CD4-positive, alpha-beta memory T cell (primary cell): ENCODE measurements at regions of chr22 and their contacts with region 1.

Region 1: DNA sequence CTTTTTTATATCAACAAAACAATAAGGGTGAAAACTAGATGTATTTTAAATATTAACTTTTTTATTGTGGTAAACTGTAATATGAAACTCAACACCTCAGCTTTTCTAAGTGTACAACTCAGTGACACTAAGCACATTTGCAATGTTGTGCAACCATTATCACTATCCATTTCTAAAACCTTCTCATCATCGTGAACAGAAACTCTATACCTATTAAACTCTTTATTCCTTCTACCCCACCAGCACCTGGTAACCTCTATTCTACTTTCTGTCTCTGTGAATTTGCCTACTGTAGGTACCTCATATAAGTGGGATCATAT is 9.4 kb downstream of the HORMAD2 start:
- DNase-seq: no peak
- H3K4me3 ChIP-seq: no peak overlapping the region
- H3K4me3 Mint-ChIP-seq: no peak overlapping the region
- H3K27ac ChIP-seq: no peak overlapping the region
- H3K27ac Mint-ChIP-seq: no peak overlapping the region
- H3K4me1 ChIP-seq: peaks cover 11% of the 10 kb centered on the region
- H3K4me1 Mint-ChIP-seq: peaks cover 7 to 12% (median 9%) of the 10 kb centered on the region in 4 donors
- H3K27me3 ChIP-seq: no peaks in the 10 kb centered on the region
- H3K27me3 Mint-ChIP-seq: peaks cover 1 to 2% of the 10 kb centered on the region in 2 donors

Region 2: DNA sequence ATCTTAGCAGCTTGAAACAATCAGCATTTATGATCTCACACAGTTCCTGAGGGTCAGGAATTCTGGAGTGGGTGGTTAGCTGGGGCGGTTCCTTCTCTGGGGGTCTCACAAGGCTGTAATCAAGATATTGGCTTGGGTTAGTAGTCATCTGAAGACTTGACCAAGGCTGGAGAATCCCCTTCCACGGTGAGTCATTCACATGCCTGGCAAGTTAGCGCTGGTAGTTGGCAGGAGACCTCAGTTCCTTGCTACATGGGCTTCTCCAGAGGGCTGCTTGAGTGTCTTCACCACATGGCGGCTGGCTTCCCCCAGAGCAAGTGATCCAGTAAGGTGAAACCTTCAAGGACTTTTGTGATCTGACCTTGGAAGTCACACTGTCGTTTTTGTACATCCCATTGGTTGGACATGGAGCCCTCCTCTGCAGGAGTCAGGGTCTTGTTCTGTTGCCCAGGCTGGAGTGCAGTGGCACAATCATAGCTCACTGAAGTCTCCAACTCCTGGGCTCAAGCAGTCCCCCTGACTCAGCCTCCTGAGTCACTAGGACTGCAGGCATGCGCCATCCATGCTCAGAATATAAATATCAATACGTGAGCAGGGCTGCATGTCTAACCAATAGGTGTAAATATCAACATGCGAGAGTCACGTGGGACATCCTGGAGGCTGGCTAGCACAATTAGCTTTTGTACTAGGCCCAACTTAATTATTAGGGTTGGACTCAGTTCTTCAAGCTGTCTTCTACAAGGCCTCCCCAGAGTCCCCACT is 501.5 kb before region 1 on chr22:
- CTCF ChIA-PET with region 1: interaction called, 7 read pairs
- POLR2A ChIA-PET with region 1: interaction called, 4 read pairs
- intact Hi-C with region 1: loop called (anchors 1 kb)
- DNase-seq: no peak
- H3K4me3 ChIP-seq: no peak overlapping the region
- H3K4me3 Mint-ChIP-seq: no peak overlapping the region
- H3K27ac ChIP-seq: no peak overlapping the region
- H3K27ac Mint-ChIP-seq: peak overlapping the region in 3 of 7 donors; percentile 18 to 60 (median 46)
- H3K4me1 ChIP-seq: peaks cover 8% of the 10 kb centered on the region
- H3K4me1 Mint-ChIP-seq: peaks cover 8 to 12% (median 10%) of the 10 kb centered on the region in 4 donors
- H3K27me3 ChIP-seq: no peaks in the 10 kb centered on the region
- H3K27me3 Mint-ChIP-seq: no peaks in the 10 kb centered on the region

Region 3: DNA sequence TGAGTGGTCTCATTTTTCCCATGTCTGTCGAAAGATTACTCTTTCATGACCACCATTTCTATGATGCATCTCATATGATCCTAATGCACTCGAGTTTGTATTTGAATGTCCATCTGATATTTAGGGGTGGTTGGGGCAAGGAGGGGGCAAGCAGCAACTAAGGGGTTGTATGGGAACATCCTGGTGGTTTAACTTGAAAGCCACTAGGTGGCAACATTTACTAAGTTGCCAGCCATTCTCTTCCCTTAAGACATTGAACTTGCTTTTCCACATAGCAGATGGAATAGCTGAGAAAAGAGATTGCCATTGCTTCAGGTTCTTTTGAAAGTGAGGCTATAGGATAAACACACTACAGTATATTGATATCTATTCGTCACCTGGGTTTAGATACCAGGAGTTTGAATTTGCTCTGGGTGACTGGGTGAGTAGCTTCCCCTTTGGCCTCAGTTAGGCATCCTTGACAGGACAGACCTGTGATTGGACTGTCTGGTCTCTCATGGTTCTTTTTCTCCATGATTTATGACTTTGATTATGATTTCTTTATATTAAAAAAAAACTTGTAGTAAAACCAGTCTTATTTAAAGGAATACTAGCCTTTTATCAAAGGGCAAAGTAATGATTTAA is 453.8 kb before region 1 on chr22:
- CTCF ChIA-PET with region 1: interaction called, 7 read pairs
- POLR2A ChIA-PET with region 1: no interaction called
- intact Hi-C with region 1: loop called (anchors 1 kb)
- DNase-seq: peak in 3 of 5 donors; percentile 12 to 24 (median 15)
- H3K4me3 ChIP-seq: no peak overlapping the region
- H3K4me3 Mint-ChIP-seq: no peak overlapping the region
- H3K27ac ChIP-seq: no peak overlapping the region
- H3K27ac Mint-ChIP-seq: peak overlapping the region in 2 of 7 donors; percentile 10 to 64
- H3K4me1 ChIP-seq: peaks cover 5% of the 10 kb centered on the region
- H3K4me1 Mint-ChIP-seq: peaks cover 13 to 28% (median 24%) of the 10 kb centered on the region in 4 donors
- H3K27me3 ChIP-seq: no peaks in the 10 kb centered on the region
- H3K27me3 Mint-ChIP-seq: no peaks in the 10 kb centered on the region

Region 4: GRCh38 chr22:29766632-29767170 is 322.9 kb before region 1 on chr22 and contains the start of gene ZMAT5:
- CTCF ChIA-PET with region 1: no interaction called
- POLR2A ChIA-PET with region 1: no interaction called
- intact Hi-C with region 1: loop called (anchors 5 kb)
- DNase-seq: peak; percentile 93 to 96 (median 95)
- H3K4me3 ChIP-seq: peak within 1 kb of the TSS; percentile 96 to 100
- H3K4me3 Mint-ChIP-seq: peak within 1 kb of the TSS; percentile 95 to 100 (median 99)
- H3K27ac ChIP-seq: peak within 1 kb of the TSS; percentile 87
- H3K27ac Mint-ChIP-seq: peak within 1 kb of the TSS; percentile 38 to 99 (median 99)
- H3K4me1 ChIP-seq: peaks cover 29% of the 10 kb centered on the region
- H3K4me1 Mint-ChIP-seq: peaks cover 22 to 53% (median 28%) of the 10 kb centered on the region in 4 donors
- H3K27me3 ChIP-seq: no peaks in the 10 kb centered on the region
- H3K27me3 Mint-ChIP-seq: no peaks in the 10 kb centered on the region
- total RNA-seq, gene ZMAT5: 16.3 to 20.4 TPM

Region 5: DNA sequence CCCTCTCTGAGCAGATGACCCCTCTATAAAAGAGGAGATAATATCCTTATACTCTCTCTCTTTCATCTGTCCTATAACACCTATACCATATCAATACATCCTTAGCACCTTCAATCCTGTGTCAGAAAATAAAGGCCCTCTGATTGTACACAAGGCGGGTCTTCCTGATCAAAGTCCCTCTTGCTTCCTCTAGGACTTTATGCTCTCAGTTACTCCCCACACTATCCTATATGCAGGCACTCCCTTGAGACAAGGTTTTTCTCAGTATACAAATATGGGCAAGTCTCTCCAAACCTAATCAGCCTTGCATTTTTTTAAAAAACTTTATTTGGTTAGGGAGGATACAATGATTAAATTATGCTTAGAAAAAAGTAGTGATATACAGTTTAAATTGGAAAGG is 26.7 kb before region 1 on chr22:
- CTCF ChIA-PET with region 1: no interaction called
- POLR2A ChIA-PET with region 1: no interaction called
- intact Hi-C with region 1: no loop called
- DNase-seq: no peak
- H3K4me3 ChIP-seq: no peak overlapping the region
- H3K4me3 Mint-ChIP-seq: no peak overlapping the region
- H3K27ac ChIP-seq: no peak overlapping the region
- H3K27ac Mint-ChIP-seq: no peak overlapping the region
- H3K4me1 ChIP-seq: no peaks in the 10 kb centered on the region
- H3K4me1 Mint-ChIP-seq: no peaks in the 10 kb centered on the region
- H3K27me3 ChIP-seq: no peaks in the 10 kb centered on the region
- H3K27me3 Mint-ChIP-seq: peaks cover 4 to 8% of the 10 kb centered on the region in 2 donors